Sciatic nerve (tissue), 2 donors: ENCODE measurements at regions of chr3 and their contacts with region 1.

Region 1: GRCh38 chr3:12479919-12480425 is 4.3 kb upstream of the TSEN2 start:
- DNase-seq: peak; percentile 60
- ATAC-seq: peak; percentile 33

Region 2: DNA sequence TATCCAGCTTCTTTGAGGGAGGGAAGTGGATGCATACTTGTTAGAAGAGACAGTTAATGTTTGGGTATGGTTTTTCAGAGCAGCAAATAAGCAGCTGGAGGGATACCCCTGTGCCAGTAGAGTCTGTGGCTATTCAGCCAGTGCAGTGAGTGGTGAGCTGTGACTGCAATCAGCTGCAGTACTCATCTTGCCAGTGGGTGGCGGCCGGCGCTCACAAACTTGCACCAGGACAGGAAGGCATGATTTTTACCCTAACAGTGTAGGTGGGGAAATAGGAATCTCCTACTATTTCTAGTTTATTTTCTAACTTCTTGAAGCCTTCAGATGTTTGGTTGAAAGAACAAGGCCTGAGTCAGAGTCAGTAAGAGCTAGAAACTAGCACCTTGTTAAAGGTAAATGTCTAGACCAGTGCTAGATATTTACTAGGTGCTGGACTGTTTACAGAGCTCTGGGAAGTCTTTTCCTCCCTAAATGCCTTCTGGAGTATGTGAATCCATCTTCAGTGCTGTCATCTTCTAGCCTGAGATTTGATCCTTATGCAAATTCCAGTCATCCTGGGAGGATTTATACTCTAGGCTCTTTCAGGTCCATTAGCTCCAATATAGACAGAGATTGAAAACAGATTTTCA is 344.8 kb before region 1 on chr3:
- intact Hi-C with region 1: loop called (anchors 5 kb)
- DNase-seq: peak; percentile 82
- ATAC-seq: peak; percentile 88

Region 3: DNA sequence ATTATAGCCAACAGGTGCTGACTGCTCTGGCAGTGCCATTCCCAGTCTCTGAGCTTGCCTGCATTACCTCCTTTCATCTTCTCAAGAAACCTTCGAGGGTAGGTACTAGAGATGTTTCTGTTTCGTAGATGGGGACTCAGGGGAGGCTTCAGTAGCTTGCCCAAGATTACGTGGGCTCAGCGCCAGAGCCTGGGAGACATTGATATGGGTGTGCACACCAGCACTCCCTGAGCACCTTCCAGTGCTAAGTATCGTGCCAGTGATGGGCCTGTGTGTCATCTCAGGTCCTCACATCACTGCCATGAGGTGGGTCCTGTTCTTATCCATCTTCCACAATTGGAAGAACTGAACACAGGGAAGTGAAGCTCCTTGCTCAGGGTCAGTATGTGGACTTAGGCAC is 19.5 kb after region 1 on chr3:
- intact Hi-C with region 1: loop called (anchors 1 kb)
- DNase-seq: no peak
- ATAC-seq: no peak